ENCODE measurements at regions of chr1 and their contacts with region 1.

Region 1: GRCh38 chr1:224851210-224851847 is 78.1 kb upstream of the DNAH14 start:
- DNase-seq: peak; percentile 40 to 59 (median 55)
- H3K4me3 ChIP-seq: no peak overlapping the region
- H3K27ac ChIP-seq: no peak overlapping the region
- H3K4me1 ChIP-seq: no peaks in the 10 kb centered on the region
- H3K27me3 ChIP-seq: peaks cover 0 to 6% (median 0%) of the 10 kb centered on the region in 5 experiments

Region 2: DNA sequence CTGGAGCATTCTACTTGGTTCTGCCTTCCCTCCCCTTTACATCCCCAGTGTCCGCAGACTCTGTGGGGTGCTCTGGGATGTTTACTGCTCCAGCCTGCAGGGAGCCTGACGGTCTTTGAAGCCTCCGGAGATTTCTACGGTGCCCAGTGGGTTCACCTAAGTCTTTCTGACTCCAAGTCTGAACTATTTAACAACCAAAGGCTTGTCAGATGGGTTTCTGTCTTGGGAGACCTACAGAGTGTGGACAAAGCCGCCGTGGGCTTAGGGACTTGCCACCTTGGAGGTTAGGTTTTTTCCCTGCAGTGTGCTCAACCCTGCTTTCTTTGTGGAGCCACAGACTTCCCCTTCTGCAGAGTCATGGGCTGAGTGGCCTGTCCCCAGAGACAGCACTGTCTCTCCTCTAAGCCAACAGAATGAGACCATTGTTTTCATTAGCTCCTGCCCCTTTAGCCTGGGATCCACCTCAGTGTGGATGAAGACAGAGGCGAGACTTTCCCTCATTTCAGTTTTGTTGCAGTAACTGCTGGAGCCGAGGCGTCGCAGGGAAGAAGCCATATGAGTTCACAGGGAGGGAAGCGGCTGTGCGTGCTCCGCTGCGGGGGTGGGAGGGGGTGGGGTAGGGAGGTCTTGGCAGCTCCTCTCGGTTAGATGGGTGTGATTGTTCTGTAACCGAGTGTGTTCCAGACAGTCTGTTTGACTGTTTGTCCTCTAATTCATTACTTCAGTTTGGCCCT is 114.5 kb before region 1 on chr1:
- CTCF ChIA-PET with region 1: no interaction called
- POLR2A ChIA-PET with region 1: no interaction called
- DNase-seq: peak in 2 of 3 donors; percentile 14 to 26
- H3K4me3 ChIP-seq: no peak overlapping the region
- H3K27ac ChIP-seq: no peak overlapping the region
- H3K4me1 ChIP-seq: no peaks in the 10 kb centered on the region
- H3K27me3 ChIP-seq: peaks cover 0 to 5% (median 0%) of the 10 kb centered on the region in 5 experiments

Region 3: DNA sequence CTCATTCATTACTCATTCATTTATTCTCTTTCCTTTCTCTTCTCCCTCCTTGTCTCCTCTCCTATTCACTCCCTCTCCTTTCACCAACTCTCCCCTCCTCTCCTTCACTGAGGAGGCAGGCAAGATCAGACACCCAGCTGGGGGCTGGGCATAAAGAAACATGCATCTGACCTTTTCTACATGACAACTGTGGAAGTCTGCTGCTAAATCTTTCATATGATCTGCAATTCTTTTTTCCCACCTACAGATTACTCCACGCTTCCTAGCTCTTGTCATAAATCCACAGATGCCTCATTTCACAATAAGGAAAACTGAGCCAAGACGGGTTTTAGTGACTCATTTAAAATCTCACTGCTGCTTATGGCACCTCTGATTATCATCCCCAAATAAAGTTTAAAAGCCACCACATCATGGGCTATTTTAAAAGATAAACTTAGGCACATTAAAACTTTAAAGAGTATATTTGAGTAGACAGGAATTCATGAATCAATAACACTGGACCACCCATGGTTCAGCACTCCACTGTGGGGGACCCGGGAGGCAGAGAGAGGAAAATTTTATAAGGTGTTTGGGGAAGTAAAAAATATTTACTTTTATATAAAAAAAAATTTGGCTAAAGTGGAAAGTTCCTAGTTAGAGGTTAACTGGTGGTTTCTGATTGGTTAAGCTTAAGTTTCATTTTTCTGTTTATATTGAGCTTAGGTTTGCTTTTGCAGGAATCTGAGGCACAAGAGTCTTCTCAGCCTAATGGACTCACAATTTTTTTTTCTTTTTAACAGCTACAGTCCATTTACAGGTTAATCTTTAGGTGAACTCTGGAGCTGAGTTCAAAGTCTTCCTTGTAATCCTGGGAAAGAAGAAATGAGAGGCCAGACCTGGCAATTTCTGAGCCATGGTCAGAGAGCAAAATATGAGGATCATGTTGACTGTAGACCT is 22.4 kb after region 1 on chr1:
- CTCF ChIA-PET with region 1: interaction called, 11 read pairs
- POLR2A ChIA-PET with region 1: no interaction called
- DNase-seq: no peak
- H3K4me3 ChIP-seq: no peak overlapping the region
- H3K27ac ChIP-seq: no peak overlapping the region
- H3K4me1 ChIP-seq: peaks cover 0 to 8% (median 2%) of the 10 kb centered on the region in 4 experiments
- H3K27me3 ChIP-seq: no peaks in the 10 kb centered on the region

Region 4: DNA sequence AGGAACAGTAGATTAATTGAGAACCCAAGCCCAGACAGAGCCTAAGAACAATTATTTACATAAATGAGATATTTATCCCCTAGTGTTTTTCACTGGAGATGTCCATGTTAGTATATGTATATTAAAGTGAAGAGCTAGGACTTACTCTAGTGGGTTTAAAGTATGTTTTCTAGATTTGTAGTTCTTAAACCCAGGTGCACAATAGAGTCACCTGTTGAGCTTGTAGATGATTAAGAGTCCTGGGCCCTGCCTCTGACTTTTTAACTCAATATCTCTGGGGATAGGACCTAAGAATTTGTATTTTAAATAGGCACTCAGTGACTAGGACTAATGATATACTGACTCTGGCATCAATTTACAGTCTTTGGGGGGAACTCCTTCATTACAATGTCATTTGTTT is 190.9 kb after region 1 on chr1:
- CTCF ChIA-PET with region 1: no interaction called
- POLR2A ChIA-PET with region 1: no interaction called
- DNase-seq: no peak
- H3K4me3 ChIP-seq: no peak overlapping the region
- H3K27ac ChIP-seq: no peak overlapping the region
- H3K4me1 ChIP-seq: no peaks in the 10 kb centered on the region
- H3K27me3 ChIP-seq: no peaks in the 10 kb centered on the region